ENCODE measurements at regions of chr11 and their contacts with region 1.

Region 1: DNA sequence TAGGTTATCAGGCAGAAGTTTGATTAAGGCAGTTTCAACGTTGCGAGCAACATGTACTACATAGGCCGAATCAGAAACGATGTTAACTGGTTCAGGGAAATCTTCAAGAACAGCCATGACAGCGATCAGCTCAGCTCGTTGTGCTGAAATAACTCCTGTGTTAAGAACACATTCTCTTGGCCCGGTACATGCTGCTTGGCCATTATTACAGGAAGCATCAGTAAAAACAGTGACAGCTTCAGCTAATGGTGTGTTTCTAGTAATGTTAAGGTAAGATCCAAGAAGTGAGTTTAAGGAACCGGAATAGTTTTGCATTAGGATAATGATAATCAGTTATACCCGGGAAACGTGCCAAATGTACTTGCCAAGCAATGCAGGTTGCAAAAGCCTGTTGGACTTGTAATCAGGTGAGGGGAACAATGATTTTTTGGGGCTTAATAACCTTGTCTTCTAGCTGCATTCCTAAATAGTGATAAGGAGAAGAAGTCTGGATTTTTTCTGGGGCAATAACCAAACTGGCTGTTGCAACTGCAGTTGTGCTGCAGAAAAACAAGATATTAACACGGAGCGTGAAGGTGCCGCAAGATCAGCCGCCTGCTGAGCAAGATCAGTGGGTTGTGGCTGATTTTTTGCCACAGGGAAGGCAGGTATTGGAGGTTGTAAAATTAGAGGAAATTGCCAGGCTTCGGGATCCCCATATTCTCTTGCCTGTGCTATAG is 14.3 kb downstream of the OR52K1 start:
- DNase-seq: no peak
- H3K4me3 ChIP-seq: no peak overlapping the region
- H3K27me3 ChIP-seq: peaks cover 6% of the 10 kb centered on the region
- CTCF ChIP-seq: no peak

Region 2: DNA sequence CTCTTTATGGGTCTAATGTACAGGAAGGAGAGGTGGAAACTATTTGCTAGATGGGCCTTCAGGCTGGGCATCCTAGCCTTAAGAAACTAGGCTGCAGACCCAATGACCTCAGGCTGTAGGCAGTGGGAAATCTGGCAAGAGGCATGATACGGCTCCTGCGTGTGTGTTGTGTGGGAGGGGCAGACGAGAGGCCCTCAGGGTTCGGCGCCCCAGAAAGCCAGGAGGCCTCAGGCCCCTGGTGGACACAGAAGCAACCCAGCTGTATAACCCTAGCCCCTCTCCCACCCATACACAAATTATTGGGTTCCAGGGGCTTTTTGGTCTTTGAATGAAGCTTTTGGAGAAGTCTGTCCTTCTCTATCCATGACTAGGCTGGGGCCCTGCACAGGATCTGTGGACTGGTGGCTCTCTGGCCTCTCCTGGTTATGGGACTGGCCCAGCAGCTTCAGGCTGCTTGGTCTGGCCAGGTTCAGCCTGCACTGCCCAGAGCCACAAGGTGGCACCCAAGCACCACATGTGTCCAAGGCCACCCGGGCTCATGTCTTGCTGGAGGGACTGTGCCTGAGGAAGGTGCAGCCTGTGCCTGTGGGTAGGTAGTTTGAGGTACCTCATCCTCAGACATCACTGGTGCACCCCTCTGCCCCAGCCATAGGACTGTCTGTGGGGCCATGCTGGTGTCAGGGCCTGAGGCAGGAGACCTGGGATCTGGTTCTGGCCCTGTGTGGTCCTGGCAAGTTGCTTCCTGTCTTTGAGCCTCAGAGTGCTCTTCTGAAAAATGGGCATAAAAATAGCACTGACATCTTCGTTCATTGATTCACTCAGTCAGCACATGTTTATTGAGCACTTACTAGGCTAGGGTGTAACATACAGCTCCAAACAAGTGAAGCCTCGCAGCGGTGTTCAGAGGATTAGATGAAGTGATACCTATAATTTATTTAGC is 314.7 kb before region 1 on chr11:
- CTCF ChIA-PET with region 1: interaction called, 109 read pairs
- POLR2A ChIA-PET with region 1: no interaction called
- DNase-seq: no peak
- H3K4me3 ChIP-seq: no peak overlapping the region
- H3K27me3 ChIP-seq: no peaks in the 10 kb centered on the region
- CTCF ChIP-seq: peak; percentile 89

Region 3: DNA sequence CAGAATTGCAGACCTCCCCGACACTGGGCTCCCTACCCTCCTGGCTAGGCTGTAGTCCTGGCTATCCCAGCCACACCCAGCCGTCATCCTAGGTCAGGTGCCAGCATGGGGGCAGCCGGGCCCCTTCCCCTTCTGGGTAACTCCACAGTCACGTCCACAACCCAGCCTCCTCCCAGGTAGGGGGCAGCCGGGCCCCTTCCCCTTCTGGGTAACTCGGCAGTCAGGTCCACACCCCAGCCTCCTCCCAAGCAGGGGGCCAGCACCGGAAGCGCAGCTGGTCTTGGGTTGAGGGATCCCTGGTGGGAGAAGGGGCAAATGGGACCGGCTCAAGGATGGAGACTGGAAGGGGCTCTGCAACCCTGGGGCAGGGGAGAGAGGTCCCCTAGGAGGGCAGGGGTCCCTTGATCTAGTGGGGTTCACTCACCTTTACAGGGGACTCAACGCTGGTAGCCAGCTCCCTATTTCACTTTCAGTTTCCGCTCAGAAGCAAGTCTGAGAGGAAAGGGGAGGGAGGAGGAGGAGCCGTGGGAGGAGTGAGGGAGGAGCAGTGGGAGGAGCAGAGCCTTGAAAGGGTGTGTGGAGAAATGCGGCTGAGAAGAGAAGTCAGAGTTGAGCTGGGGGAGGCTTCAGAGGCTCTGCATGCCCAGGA is 103.4 kb before region 1 on chr11 and contains the start of gene TRIM21:
- CTCF ChIA-PET with region 1: no interaction called
- POLR2A ChIA-PET with region 1: no interaction called
- DNase-seq: peak; percentile 48
- H3K4me3 ChIP-seq: peak within 1 kb of the TSS; percentile 84
- H3K27me3 ChIP-seq: no peaks in the 10 kb centered on the region
- CTCF ChIP-seq: no peak
- polyA plus RNA-seq, gene TRIM21: 24.3 and 26.9 TPM in 2 replicates

Region 4: DNA sequence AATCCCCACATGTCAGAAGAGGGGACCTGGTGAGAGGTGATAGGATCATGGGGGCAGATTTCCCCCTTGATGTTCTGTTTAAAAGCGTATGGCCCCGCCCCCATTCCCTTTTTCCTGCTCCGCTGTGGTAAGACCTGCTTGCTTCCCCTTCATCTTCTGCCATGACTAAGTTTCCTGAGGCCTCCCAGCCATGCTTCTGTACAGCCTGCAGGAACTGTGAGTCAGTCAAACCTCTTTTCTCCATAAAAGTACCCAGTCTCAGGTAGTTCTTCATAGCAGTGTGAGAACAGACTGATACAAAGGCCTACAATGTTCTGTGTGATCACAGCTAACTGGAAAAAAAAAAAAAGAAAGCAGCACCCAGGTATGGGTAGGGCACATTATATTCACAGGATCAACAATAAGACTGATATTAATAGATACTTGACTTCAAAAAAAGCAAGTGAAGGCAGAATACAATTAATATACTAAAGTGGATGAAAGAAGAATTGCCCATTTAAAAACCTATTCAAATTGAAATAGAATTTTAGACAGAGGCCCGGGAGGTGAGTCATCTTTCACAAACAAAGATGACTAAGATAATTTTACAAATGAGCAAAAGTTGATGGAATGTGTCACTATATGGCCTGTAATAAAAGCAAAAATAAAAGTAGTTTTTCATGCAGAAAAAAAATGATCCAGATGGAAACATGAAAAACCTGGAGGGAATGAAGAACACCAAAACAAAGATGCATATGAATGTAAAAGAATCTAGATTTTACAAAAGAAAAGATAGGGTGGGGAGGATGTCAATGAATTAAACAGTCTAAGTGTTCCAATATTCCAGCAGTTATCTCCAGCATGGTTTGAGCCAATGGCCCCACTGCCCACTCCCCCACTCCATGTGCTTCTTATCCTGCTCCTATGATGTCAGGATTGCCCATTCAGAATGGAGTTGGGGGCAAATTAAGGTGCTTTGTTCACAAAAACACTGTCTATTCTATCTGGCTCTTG is 15.8 kb before region 1 on chr11:
- CTCF ChIA-PET with region 1: interaction called, 23 read pairs
- POLR2A ChIA-PET with region 1: no interaction called
- DNase-seq: no peak
- H3K4me3 ChIP-seq: no peak overlapping the region
- H3K27me3 ChIP-seq: peaks cover 2% of the 10 kb centered on the region; the same call in 1 of the 2 replicates
- CTCF ChIP-seq: no peak